CD8-positive, alpha-beta T cell (primary cell): ENCODE measurements at regions of chr16 and their contacts with region 1.

Region 1: DNA sequence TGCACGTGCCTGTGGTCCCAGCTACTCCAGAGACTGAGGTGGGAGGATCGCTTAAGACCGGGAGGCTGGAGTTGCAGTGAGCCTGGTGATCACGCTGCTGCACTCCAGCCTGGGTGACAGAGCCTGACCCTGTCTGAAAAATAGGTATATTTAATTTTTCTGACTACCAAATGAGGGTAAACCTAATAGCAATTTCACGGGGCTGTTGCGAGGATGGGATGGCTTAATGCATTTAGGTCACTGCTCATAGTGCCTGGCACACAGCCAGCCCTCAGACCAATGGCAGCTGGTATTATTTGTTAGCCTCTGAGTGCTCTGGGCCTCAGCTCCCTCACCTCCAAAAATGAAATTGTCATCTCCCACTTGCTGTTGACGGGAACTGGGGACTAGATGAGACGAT is 5.9 kb upstream of the CDIP1 start:
- DNase-seq: no peak
- ATAC-seq: no peak
- H3K4me3 ChIP-seq: no peak overlapping the region
- H3K4me3 Mint-ChIP-seq: no peak overlapping the region
- H3K27ac ChIP-seq: no peak overlapping the region
- H3K27ac Mint-ChIP-seq: no peak overlapping the region
- H3K4me1 ChIP-seq: peaks cover 9% of the 10 kb centered on the region
- H3K4me1 Mint-ChIP-seq: peaks cover 3% of the 10 kb centered on the region
- H3K27me3 ChIP-seq: no peaks in the 10 kb centered on the region
- H3K27me3 Mint-ChIP-seq: no peaks in the 10 kb centered on the region
- CTCF ChIP-seq: no peak

Region 2: DNA sequence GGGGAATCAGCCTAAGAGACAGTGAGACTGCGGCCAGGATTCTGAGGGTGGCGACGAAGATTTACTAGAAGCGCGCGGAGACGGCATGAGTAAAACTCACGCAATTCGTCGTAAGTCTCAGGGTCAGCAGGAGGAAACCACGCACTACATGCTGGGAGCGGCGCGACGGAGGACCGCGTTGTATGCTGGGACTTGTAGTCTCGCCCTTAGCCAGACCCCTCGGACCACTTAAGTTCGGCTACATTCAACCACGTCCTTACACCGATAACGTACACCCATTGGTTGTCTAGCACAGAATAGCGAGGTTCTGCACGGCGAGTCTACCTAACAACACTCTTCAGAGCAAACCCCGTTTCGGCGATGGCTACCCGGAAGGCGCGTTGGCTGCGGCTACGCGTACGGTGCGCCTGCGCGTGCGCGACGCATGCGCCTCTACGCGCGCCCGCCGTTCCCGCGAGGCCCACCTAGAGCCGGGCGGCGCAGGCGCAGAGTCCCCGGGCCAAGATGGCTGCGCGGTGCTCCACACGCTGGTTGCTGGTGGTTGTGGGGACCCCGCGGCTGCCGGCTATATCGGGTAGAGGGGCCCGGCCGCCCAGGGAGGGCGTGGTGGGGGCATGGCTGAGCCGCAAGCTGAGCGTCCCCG is 119.0 kb before region 1 on chr16 and contains the start of gene DNAJA3:
- CTCF ChIA-PET with region 1: no interaction called
- POLR2A ChIA-PET with region 1: no interaction called
- intact Hi-C with region 1: loop called in 1 of 2 experiments (anchors 1 kb)
- DNase-seq: peak; percentile 80 to 97 (median 92)
- ATAC-seq: peak; percentile 84
- H3K4me3 ChIP-seq: peak within 1 kb of the TSS; percentile 83 to 100
- H3K4me3 Mint-ChIP-seq: peak within 1 kb of the TSS; percentile 96
- H3K27ac ChIP-seq: peak within 1 kb of the TSS; percentile 96 to 100
- H3K27ac Mint-ChIP-seq: peak within 1 kb of the TSS; percentile 99
- H3K4me1 ChIP-seq: peaks cover 23% of the 10 kb centered on the region
- H3K4me1 Mint-ChIP-seq: peaks cover 32% of the 10 kb centered on the region
- H3K27me3 ChIP-seq: no peaks in the 10 kb centered on the region
- H3K27me3 Mint-ChIP-seq: no peaks in the 10 kb centered on the region
- CTCF ChIP-seq: no peak
- total RNA-seq, gene DNAJA3: 13.8 to 17.4 TPM

Region 3: DNA sequence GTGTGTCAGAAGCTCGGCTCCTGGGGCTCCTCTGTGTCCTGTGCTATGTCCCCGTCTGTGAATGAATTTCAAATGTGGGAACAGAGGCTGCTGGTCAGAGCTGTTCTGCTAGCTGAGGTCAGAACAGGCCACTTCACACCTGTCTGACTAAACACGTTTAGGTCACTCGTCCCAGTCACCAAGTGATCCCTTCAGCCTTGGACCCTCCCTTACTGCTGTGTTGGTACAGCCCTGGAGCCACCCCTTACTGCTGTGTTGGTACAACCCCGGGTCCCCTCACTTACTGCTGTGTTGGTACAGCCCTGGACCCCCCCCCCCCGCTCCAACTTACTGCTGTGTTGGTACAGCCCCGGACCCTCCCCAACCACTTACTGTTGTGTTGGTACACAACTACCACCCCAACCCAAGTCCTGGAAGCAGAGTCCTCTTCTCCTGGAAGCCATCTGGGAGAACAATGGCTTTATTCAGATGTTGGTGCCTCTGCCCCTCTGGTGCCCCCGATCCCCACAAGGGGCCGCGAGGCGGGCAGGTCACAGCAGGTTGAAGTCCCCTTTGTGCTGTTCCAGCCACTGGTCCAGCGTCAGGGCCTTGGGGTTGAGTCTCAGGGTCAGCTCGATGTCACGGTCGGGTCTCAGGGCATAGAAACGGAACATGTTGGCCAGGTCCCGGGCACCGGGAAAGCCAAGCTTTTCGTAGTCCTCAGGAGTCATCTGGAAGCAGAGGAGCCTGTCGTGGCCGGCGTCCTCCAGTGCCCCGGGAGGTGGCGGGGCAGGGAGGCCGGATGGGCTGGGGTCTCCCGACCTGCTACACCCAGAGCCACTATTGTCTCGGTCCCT is 83.0 kb before region 1 on chr16:
- CTCF ChIA-PET with region 1: interaction called, 10 read pairs
- POLR2A ChIA-PET with region 1: no interaction called
- intact Hi-C with region 1: no loop called
- DNase-seq: no peak
- ATAC-seq: no peak
- H3K4me3 ChIP-seq: no peak overlapping the region
- H3K4me3 Mint-ChIP-seq: no peak overlapping the region
- H3K27ac ChIP-seq: no peak overlapping the region
- H3K27ac Mint-ChIP-seq: no peak overlapping the region
- H3K4me1 ChIP-seq: peaks cover 24% of the 10 kb centered on the region
- H3K4me1 Mint-ChIP-seq: peaks cover 24% of the 10 kb centered on the region
- H3K27me3 ChIP-seq: no peaks in the 10 kb centered on the region
- H3K27me3 Mint-ChIP-seq: no peaks in the 10 kb centered on the region
- CTCF ChIP-seq: no peak

Region 4: GRCh38 chr16:4517812-4518680 is 26.4 kb before region 1 on chr16:
- CTCF ChIA-PET with region 1: interaction called, 6 read pairs
- POLR2A ChIA-PET with region 1: interaction called, 3 read pairs
- intact Hi-C with region 1: loop called in 1 of 2 experiments (anchors 1 kb)
- DNase-seq: no peak
- ATAC-seq: no peak
- H3K4me3 ChIP-seq: no peak overlapping the region
- H3K4me3 Mint-ChIP-seq: no peak overlapping the region
- H3K27ac ChIP-seq: peak overlapping the region in 1 of 2 experiments; percentile 18
- H3K27ac Mint-ChIP-seq: peak overlapping the region; percentile 80
- H3K4me1 ChIP-seq: peaks cover 34% of the 10 kb centered on the region
- H3K4me1 Mint-ChIP-seq: peaks cover 40% of the 10 kb centered on the region
- H3K27me3 ChIP-seq: no peaks in the 10 kb centered on the region
- H3K27me3 Mint-ChIP-seq: no peaks in the 10 kb centered on the region
- CTCF ChIP-seq: no peak

Region 5: GRCh38 chr16:4529085-4530060 is 15.1 kb before region 1 on chr16:
- CTCF ChIA-PET with region 1: interaction called, 11 read pairs
- POLR2A ChIA-PET with region 1: interaction called, 5 read pairs
- intact Hi-C with region 1: no loop called
- DNase-seq: peak in 1 of 9 experiments; percentile 39
- ATAC-seq: peak; percentile 70
- H3K4me3 ChIP-seq: no peak overlapping the region
- H3K4me3 Mint-ChIP-seq: peak overlapping the region; percentile 75
- H3K27ac ChIP-seq: peak overlapping the region in 1 of 2 experiments; percentile 3
- H3K27ac Mint-ChIP-seq: peak overlapping the region; percentile 93
- H3K4me1 ChIP-seq: peaks cover 23% of the 10 kb centered on the region
- H3K4me1 Mint-ChIP-seq: peaks cover 54% of the 10 kb centered on the region
- H3K27me3 ChIP-seq: no peaks in the 10 kb centered on the region
- H3K27me3 Mint-ChIP-seq: no peaks in the 10 kb centered on the region
- CTCF ChIP-seq: no peak

Region 6: GRCh38 chr16:4780235-4780634 is 235.8 kb after region 1 on chr16:
- CTCF ChIA-PET with region 1: no interaction called
- POLR2A ChIA-PET with region 1: no interaction called
- intact Hi-C with region 1: no loop called
- DNase-seq: no peak
- ATAC-seq: no peak
- H3K4me3 ChIP-seq: no peak overlapping the region
- H3K4me3 Mint-ChIP-seq: no peak overlapping the region
- H3K27ac ChIP-seq: no peak overlapping the region
- H3K27ac Mint-ChIP-seq: no peak overlapping the region
- H3K4me1 ChIP-seq: no peaks in the 10 kb centered on the region
- H3K4me1 Mint-ChIP-seq: no peaks in the 10 kb centered on the region
- H3K27me3 ChIP-seq: no peaks in the 10 kb centered on the region
- H3K27me3 Mint-ChIP-seq: no peaks in the 10 kb centered on the region
- CTCF ChIP-seq: no peak